Activated CD4-positive, alpha-beta memory T cell treated with anti-CD3 and anti-CD28 coated beads for 36 hours (primary cell): ENCODE measurements at regions of chr10 and their contacts with region 1.

Region 1: GRCh38 chr10:71893920-71894319 is 42.9 kb upstream of the PSAP start:
- DNase-seq: no peak
- H3K4me3 Mint-ChIP-seq: no peak overlapping the region
- H3K27ac Mint-ChIP-seq: no peak overlapping the region
- H3K4me1 Mint-ChIP-seq: peaks cover 6% of the 10 kb centered on the region
- H3K27me3 Mint-ChIP-seq: peaks cover 16% of the 10 kb centered on the region

Region 2: GRCh38 chr10:71801361-71801760 is 92.6 kb before region 1 on chr10:
- CTCF ChIA-PET with region 1: no interaction called
- POLR2A ChIA-PET with region 1: no interaction called
- intact Hi-C with region 1: no loop called
- DNase-seq: no peak
- H3K4me3 Mint-ChIP-seq: no peak overlapping the region
- H3K27ac Mint-ChIP-seq: no peak overlapping the region
- H3K4me1 Mint-ChIP-seq: peaks cover 8% of the 10 kb centered on the region
- H3K27me3 Mint-ChIP-seq: no peaks in the 10 kb centered on the region

Region 3: DNA sequence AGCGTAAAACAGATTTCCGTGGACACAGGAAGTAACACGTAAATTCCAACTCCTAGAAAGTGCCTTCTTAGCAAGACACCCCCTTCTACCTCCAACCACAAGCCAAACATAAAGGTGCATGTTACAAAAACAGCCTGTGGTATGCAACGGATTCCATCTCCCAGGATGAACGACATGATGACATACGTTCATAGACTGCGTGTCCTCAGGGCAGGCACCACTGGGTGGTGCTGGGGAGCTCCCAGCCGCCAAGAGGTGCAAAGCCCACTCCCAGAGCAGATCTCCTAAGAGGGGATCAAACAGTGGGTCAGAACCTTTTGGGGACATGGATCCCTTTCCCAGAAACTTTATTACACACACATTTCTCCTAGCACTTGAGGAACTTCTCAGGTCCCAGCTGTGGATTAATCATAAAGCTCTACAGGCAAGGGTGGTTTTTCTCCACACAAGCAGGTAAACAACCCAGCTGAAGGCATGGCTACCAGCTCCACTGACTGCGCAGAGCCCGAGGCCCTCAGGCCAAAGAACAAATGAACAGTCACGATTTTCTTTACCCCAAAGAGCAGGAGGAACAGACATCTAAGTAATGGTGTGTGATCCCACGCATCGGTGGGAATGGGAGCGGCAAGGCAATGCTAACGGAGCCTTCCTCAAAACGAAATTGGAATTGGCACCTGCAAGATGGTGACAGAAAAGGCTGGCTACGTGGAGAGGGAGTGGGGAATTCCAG is 56.7 kb before region 1 on chr10:
- CTCF ChIA-PET with region 1: interaction called, 24 read pairs
- POLR2A ChIA-PET with region 1: no interaction called
- intact Hi-C with region 1: no loop called
- DNase-seq: peak; percentile 26
- H3K4me3 Mint-ChIP-seq: no peak overlapping the region
- H3K27ac Mint-ChIP-seq: no peak overlapping the region
- H3K4me1 Mint-ChIP-seq: peaks cover 61% of the 10 kb centered on the region
- H3K27me3 Mint-ChIP-seq: no peaks in the 10 kb centered on the region

Region 4: DNA sequence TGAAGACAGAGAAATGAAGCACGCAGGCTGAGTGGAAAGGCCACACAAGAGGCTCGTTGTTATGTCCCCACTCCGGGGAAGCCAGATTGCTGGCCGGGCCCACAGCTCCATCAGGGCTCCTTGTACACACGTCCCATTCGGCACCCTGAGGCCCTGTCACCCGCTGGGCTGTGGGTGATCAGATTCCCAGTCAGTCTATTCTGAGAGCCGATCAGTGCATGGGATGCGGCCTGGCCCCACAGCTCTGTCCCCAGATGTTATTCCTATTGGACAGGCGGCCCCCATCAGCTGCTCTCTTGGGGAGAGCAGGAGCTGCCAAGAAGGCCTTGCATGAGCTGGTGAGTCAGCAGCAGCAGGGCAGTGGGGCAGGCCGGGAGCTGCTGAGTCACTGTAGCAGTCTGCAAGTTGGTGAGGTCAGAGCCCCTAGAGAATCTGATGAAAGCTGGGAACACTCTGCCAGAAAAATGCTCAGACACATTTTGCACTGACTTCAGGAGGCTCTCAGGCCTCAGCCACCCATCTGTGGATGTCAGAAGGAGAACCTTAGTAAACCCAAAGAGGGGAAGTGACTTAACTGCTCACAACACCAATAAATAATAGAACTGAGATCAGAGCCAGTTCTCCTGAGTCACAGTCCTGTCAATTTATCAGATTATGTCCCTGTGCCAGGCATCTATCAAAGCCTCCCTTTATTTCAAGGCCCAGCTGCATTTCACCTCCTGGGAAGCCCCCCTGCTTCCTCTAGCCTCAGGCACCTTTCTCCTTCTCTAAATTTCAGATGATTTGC is 33.5 kb before region 1 on chr10:
- CTCF ChIA-PET with region 1: interaction called, 13 read pairs
- POLR2A ChIA-PET with region 1: no interaction called
- intact Hi-C with region 1: no loop called
- DNase-seq: peak; percentile 71
- H3K4me3 Mint-ChIP-seq: no peak overlapping the region
- H3K27ac Mint-ChIP-seq: peak overlapping the region; percentile 77
- H3K4me1 Mint-ChIP-seq: peaks cover 7% of the 10 kb centered on the region
- H3K27me3 Mint-ChIP-seq: no peaks in the 10 kb centered on the region

Region 5: GRCh38 chr10:71916827-71917226 is 22.9 kb after region 1 on chr10:
- CTCF ChIA-PET with region 1: interaction called, 11 read pairs
- POLR2A ChIA-PET with region 1: no interaction called
- intact Hi-C with region 1: no loop called
- DNase-seq: no peak
- H3K4me3 Mint-ChIP-seq: no peak overlapping the region
- H3K27ac Mint-ChIP-seq: no peak overlapping the region
- H3K4me1 Mint-ChIP-seq: no peaks in the 10 kb centered on the region
- H3K27me3 Mint-ChIP-seq: peaks cover 3% of the 10 kb centered on the region

Region 6: DNA sequence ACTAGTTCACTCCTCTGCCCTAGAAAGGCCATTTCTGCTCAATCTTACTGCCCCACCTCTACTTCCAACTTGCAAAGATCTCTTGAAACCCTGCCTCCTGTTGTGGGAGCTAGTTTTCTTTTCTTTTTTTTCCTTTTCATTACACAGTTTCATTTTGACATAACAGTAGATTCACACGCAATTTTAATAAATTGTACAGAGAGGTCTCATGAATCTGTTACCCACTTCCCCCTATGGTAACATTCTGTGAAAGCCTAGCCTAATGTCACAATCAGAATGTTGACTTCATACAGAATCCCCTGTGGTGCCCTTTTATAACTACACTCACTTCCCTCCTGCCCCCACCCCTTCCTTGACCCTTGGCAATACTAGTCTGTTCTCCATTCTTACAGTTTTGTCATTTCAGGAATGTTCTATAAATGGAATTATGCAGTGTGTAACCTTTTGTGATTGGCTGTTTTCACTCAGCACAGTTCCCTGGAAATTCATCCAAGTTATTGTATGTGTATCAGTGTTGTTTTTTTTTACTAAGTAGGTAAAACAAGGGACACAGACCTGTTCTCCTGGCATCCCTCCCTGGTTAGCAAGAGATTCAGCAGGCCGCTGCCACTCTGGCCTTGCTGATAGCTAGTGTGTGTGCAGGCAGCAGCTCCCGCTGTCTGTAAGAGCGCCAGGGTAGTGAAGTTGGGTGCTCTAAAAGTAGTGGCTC is 91.8 kb after region 1 on chr10:
- CTCF ChIA-PET with region 1: interaction called, 14 read pairs
- POLR2A ChIA-PET with region 1: no interaction called
- intact Hi-C with region 1: no loop called
- DNase-seq: peak; percentile 47
- H3K4me3 Mint-ChIP-seq: peak overlapping the region; percentile 17
- H3K27ac Mint-ChIP-seq: peak overlapping the region; percentile 74
- H3K4me1 Mint-ChIP-seq: peaks cover 21% of the 10 kb centered on the region
- H3K27me3 Mint-ChIP-seq: peaks cover 7% of the 10 kb centered on the region

Region 7: GRCh38 chr10:72223743-72224101 is 329.8 kb after region 1 on chr10:
- CTCF ChIA-PET with region 1: interaction called, 8 read pairs
- POLR2A ChIA-PET with region 1: no interaction called
- intact Hi-C with region 1: loop called (anchors 2 kb)
- DNase-seq: peak; percentile 41
- H3K4me3 Mint-ChIP-seq: no peak overlapping the region
- H3K27ac Mint-ChIP-seq: peak overlapping the region; percentile 89
- H3K4me1 Mint-ChIP-seq: peaks cover 56% of the 10 kb centered on the region
- H3K27me3 Mint-ChIP-seq: no peaks in the 10 kb centered on the region